Mammary epithelial cell (primary cell): ENCODE measurements at regions of chr2 and their contacts with region 1.

Region 1: GRCh38 chr2:25878361-25879132 is at the start of gene ASXL2:
- DNase-seq: peak; percentile 98
- H3K4me3 ChIP-seq: peak within 1 kb of the TSS; percentile 90 to 97 (median 92)
- H3K27ac ChIP-seq: peak within 1 kb of the TSS; percentile 94
- H3K4me1 ChIP-seq: peaks cover 12% of the 10 kb centered on the region
- H3K27me3 ChIP-seq: no peaks in the 10 kb centered on the region
- CTCF ChIP-seq: peak in 1 of 2 donors; percentile 13
- total RNA-seq, gene ASXL2: 15.2 to 39.4 TPM

Region 2: DNA sequence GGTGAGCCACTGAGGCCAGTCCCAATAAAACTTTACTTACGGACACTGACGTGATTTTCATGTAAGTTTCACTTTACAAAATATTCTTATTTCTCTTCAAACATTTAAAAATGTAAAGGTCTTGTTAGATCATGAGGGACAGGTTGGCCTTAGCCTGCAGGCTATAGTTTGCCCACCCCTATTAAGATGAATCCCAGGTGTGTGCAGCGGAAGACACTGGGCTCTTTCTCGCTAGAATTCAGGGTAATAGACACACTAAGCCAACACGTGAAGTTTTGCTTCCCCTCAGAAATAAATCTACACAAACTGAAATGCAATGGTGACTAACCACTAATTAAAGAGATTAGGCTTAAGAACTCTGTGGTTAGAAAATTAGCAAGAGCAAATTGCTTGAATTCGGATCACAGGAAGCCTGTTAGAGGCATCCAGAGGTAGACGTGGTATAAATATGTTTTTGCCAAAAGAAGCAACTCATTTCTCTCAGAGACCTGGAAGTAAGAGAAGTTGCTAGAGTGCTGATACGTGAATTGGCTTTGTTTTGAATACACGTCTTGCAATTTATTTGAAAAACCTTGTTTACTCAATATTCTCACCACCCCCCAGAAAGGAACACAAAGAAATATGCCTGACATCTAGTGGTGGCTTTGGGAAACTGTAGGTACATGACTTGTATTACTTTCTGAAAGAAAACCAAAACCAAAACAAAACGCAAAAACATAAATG is 356.7 kb before region 1 on chr2:
- CTCF ChIA-PET with region 1: no interaction called
- dilution Hi-C with region 1: no loop called
- in situ Hi-C with region 1: no loop called
- intact Hi-C with region 1: no loop called
- DNase-seq: peak; percentile 49
- H3K4me3 ChIP-seq: no peak overlapping the region
- H3K27ac ChIP-seq: no peak overlapping the region
- H3K4me1 ChIP-seq: no peaks in the 10 kb centered on the region
- H3K27me3 ChIP-seq: no peaks in the 10 kb centered on the region
- CTCF ChIP-seq: peak; percentile 81 to 86

Region 3: GRCh38 chr2:25851740-25852503 is 26.6 kb before region 1 on chr2:
- CTCF ChIA-PET with region 1: interaction called, 5 read pairs
- dilution Hi-C with region 1: no loop called
- in situ Hi-C with region 1: no loop called
- intact Hi-C with region 1: loop called (anchors 2 kb)
- DNase-seq: peak; percentile 70
- H3K4me3 ChIP-seq: no peak overlapping the region
- H3K27ac ChIP-seq: peak overlapping the region; percentile 7
- H3K4me1 ChIP-seq: peaks cover 7% of the 10 kb centered on the region
- H3K27me3 ChIP-seq: no peaks in the 10 kb centered on the region
- CTCF ChIP-seq: peak; percentile 67 to 72

Region 4: GRCh38 chr2:25926984-25927756 is 48.6 kb after region 1 on chr2:
- CTCF ChIA-PET with region 1: no interaction called
- dilution Hi-C with region 1: loop called (anchors 5 kb)
- in situ Hi-C with region 1: no loop called
- intact Hi-C with region 1: no loop called
- DNase-seq: no peak
- H3K4me3 ChIP-seq: no peak overlapping the region
- H3K27ac ChIP-seq: no peak overlapping the region
- H3K4me1 ChIP-seq: no peaks in the 10 kb centered on the region
- H3K27me3 ChIP-seq: no peaks in the 10 kb centered on the region
- CTCF ChIP-seq: no peak

Region 5: GRCh38 chr2:25976983-25977741 is 98.6 kb after region 1 on chr2:
- CTCF ChIA-PET with region 1: no interaction called
- dilution Hi-C with region 1: no loop called
- in situ Hi-C with region 1: no loop called
- intact Hi-C with region 1: loop called (anchors 5 kb)
- DNase-seq: peak; percentile 72
- H3K4me3 ChIP-seq: no peak overlapping the region
- H3K27ac ChIP-seq: peak overlapping the region; percentile 92
- H3K4me1 ChIP-seq: peaks cover 42% of the 10 kb centered on the region
- H3K27me3 ChIP-seq: no peaks in the 10 kb centered on the region
- CTCF ChIP-seq: no peak